Activated naive CD4-positive, alpha-beta T cell treated with anti-CD3 and anti-CD28 coated beads for 36 hours (primary cell): ENCODE measurements at regions of chr9 and their contacts with region 1.

Region 1: DNA sequence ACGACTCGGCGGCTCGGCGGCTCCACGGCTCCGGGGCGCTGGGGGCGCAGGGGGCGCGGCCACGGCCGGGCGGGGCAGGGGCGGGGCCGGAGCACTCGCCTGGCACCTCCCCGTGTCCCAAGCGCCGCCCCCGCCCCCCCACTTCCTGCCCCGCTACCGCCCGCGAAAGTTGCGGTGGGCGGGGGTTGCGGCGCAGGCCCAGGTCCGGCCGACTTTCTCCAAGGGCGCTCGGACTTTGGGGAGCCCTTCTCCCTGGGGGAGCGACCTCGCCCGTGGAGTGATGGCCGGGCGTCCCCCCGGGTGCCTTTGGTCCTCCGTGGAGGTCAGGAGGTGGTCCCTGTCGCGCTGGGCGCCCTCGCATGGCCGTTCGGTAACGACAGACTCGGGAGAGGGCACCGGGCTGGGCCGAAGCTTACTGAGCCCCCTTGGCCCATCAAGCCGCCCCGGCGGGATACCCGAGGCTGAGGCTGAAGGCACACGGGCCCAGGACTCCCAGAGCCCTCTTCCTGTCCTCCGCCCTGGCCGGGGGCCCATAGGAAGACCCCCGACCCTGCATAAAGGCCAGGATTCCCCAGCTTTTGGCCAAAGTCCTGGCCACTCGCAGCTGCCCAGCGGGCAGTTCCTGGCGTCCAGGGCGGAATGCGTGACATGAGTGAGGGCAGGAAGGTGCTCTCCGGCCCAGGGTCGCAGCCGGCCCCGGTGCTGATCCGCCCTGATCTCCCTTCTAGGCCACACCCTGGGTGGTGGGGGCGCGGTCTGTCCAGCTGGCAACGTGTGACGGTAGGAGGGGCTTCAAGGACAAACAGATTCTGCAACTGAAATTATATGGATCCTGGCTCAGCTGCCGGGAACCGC is 883 bp upstream of the VAV2 start:
- DNase-seq: peak; percentile 74
- H3K4me3 Mint-ChIP-seq: peak overlapping the region; percentile 60
- H3K27ac Mint-ChIP-seq: no peak overlapping the region
- H3K4me1 Mint-ChIP-seq: peaks cover 2% of the 10 kb centered on the region
- H3K27me3 Mint-ChIP-seq: peaks cover 3% of the 10 kb centered on the region

Region 2: DNA sequence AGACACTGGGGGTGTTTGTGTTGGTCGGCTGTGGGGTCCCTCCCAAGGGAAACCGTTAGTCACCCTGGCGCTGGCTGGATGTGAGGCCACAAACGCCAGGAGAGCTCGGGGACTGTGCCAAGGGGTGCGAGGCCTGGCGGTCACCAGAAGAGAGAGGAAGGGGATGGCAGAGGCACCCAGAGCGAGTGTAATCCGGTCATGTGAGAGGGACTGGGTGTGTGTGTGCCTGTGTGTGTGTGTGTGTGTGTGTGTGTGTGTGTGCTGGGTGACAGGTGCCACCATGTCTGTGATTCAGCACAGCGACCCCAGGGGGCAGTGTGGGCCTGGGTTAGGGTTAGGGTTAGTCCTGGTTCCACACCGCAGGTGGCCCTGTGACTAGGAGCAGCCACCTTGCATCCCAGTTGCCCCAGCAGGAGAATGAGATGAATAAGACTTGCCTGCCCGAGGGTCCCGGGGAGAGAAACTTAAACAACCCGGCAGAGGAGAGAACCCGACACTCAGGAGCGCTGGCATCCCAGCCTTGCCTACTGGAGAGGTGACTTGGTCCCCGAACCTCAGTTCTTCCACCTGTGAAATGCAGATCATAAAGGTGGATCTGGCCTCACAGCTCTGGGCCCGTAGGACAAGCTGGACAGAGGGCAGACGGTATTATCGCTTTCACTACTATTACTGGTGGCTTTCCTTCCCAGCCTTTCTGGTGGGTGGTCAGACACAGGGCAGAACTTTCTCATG is 459.9 kb before region 1 on chr9:
- CTCF ChIA-PET with region 1: interaction called, 4 read pairs
- intact Hi-C with region 1: loop called (anchors 2 kb)
- DNase-seq: peak; percentile 89
- H3K4me3 Mint-ChIP-seq: peak overlapping the region; percentile 10
- H3K27ac Mint-ChIP-seq: no peak overlapping the region
- H3K4me1 Mint-ChIP-seq: peaks cover 14% of the 10 kb centered on the region
- H3K27me3 Mint-ChIP-seq: no peaks in the 10 kb centered on the region

Region 3: DNA sequence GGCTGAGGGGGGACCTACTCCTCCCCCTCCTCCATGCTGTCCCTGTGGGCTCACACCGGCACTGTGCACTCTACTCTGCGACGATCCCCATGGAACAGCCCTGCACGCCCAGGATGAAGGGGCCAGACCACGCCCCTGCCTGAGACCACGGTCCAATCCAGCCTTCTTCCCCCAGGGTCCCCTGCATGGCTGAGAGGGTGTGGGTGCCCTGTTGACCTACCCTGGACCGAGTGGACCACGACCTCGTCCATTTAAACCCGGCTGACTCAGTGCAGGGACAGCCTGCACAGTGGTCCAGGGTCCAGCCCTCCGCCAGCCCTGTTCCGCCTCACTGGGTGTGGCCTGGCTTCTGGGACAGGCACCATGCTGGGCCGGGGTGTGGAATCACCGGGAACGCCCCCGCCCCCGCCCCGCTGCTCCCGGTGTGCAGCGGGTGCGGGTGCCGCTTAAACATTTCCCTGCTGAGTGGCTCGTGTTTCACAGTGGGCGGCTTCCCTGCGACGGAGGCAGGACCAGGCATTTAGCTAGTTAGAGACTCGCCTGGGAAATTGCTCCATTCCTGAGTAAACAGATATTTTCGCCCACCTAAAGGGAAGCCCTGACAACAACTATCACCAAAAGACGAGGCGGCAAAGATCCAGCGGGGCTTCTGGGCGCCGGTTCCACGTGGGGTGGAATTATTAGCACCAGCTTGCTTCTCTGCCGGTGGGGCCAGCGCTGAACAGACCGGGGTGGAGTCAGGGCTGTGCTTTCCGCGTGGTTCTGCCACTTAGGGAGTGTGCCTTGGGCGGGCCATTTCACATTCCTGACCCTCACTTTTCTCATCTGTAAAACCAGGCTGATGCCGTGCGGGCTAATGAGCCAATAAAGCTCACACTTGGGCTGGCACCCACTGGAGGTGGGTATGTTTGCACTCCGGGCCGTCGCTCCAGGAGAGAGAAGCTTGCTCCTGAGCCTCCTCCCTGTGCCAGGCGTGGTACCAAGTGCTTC is 334.3 kb before region 1 on chr9:
- CTCF ChIA-PET with region 1: no interaction called
- intact Hi-C with region 1: loop called (anchors 5 kb)
- DNase-seq: peak; percentile 60
- H3K4me3 Mint-ChIP-seq: peak overlapping the region; percentile 45
- H3K27ac Mint-ChIP-seq: no peak overlapping the region
- H3K4me1 Mint-ChIP-seq: peaks cover 41% of the 10 kb centered on the region
- H3K27me3 Mint-ChIP-seq: peaks cover 18% of the 10 kb centered on the region

Region 4: GRCh38 chr9:133782157-133783130 is 210.6 kb before region 1 on chr9:
- CTCF ChIA-PET with region 1: interaction called, 84 read pairs
- intact Hi-C with region 1: loop called (anchors 1 kb)
- DNase-seq: peak; percentile 83
- H3K4me3 Mint-ChIP-seq: no peak overlapping the region
- H3K27ac Mint-ChIP-seq: no peak overlapping the region
- H3K4me1 Mint-ChIP-seq: no peaks in the 10 kb centered on the region
- H3K27me3 Mint-ChIP-seq: no peaks in the 10 kb centered on the region

Region 5: GRCh38 chr9:134024828-134025605 is 32.0 kb after region 1 on chr9 and contains the start of gene BRD3OS:
- CTCF ChIA-PET with region 1: interaction called, 17 read pairs
- intact Hi-C with region 1: loop called (anchors 2 kb)
- DNase-seq: peak; percentile 93
- H3K4me3 Mint-ChIP-seq: peak within 1 kb of the TSS; percentile 77
- H3K27ac Mint-ChIP-seq: no peak within 1 kb of the TSS
- H3K4me1 Mint-ChIP-seq: peaks cover 11% of the 10 kb centered on the region
- H3K27me3 Mint-ChIP-seq: no peaks in the 10 kb centered on the region
- total RNA-seq, gene BRD3OS: 6.3 to 6.7 TPM

Region 6: GRCh38 chr9:134099123-134099787 is 106.2 kb after region 1 on chr9:
- CTCF ChIA-PET with region 1: interaction called, 5 read pairs
- intact Hi-C with region 1: loop called (anchors 1 kb)
- DNase-seq: peak; percentile 70
- H3K4me3 Mint-ChIP-seq: no peak overlapping the region
- H3K27ac Mint-ChIP-seq: no peak overlapping the region
- H3K4me1 Mint-ChIP-seq: no peaks in the 10 kb centered on the region
- H3K27me3 Mint-ChIP-seq: peaks cover 8% of the 10 kb centered on the region

Region 7: DNA sequence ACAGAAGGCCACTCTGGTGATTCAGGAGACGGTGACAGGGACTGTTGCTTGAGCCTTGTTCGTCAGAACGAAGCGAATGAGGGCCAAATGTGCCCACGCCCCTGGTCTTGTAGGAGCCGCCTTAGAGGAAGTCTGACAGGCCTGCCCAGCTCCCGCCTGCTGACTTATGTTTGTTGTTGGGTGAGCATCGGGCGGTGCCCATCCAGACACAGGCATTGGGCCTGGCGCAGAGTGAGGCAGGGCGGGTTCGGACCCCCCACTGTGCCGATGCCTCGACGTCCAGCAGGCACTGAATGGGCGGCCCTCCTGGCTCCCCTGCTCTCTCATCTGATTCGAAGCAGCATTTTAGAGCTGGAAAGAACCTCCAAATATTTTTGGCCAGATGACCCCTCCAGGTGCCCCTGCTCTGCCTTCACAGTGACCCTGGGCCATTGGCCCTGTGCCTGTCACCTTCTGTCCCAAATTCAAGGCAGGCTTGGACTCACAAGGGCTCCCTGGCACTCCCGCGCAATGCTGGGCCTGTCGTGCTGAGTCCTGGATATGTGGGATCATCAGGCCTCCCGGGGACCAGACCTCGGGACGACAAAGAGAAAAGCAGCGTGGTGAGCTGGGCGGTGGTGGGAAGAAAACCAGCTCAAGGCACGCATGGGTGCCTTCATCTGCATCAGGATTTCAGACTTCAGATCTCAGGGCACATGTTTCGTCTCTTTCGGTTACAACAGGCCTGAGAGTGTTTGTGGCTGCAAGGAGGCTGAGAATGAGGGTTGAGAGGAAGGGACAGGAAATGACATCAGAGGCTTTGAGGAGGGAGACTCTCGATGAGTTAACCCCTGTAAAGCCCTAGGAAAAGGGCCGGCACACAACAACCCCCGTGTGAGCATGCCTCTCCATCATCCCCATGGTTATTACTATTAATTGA is 1057.3 kb after region 1 on chr9:
- CTCF ChIA-PET with region 1: no interaction called
- intact Hi-C with region 1: no loop called
- DNase-seq: no peak
- H3K4me3 Mint-ChIP-seq: no peak overlapping the region
- H3K27ac Mint-ChIP-seq: no peak overlapping the region
- H3K4me1 Mint-ChIP-seq: no peaks in the 10 kb centered on the region
- H3K27me3 Mint-ChIP-seq: peaks cover 49% of the 10 kb centered on the region